Ovary (tissue), 10 donors: ENCODE measurements at regions of chr1 and their contacts with region 1.

Region 1: DNA sequence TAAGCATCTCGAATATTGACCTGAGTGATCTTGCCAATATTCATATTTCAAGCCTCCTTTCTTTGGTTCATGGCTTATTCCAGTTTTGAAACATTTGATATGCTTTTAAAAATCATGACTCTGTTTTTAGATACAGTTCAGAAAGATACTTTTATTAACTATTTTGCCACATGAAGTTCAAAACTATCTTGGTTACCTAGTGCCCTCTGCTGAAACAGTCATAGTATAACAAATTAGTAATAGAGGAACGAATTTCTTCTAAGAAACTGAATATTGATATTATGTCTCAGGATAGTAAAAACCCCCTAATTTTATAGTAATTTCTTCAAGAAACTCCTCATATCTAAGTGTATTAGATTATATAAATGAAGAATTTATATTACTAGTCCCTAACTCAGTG is 52.6 kb upstream of the RC3H1 start:
- DNase-seq: no peak
- H3K4me3 ChIP-seq: no peak overlapping the region
- H3K27ac ChIP-seq: no peak overlapping the region
- H3K4me1 ChIP-seq: no peaks in the 10 kb centered on the region
- H3K27me3 ChIP-seq: no peaks in the 10 kb centered on the region
- CTCF ChIP-seq: no peak
- EP300 ChIP-seq: no peak
- POLR2A ChIP-seq: no peak

Region 2: DNA sequence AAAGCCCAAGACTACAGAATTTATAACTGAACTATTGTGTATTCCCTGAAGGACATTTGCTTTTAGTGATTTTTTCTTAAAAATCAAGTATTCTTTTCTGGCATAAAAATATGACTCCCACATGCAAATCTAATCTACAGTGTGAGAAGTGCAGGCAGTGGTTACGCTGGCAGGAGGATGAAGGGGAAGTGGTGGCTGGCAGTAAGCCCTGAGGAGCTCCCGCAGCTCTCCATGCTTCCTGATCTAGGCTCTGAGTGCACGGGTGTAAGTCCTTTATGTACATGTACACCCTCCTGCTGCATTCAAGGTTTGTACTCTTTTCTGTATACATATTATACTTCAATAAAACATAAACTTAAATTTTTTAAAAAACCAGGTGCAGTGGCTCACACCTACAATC is 665.1 kb before region 1 on chr1:
- intact Hi-C with region 1: loop called in 1 of 4 experiments (anchors 10 kb)
- DNase-seq: peak; percentile 28 to 63 (median 45)
- H3K4me3 ChIP-seq: no peak overlapping the region
- H3K27ac ChIP-seq: no peak overlapping the region
- H3K4me1 ChIP-seq: peaks cover 9% of the 10 kb centered on the region
- H3K27me3 ChIP-seq: no peaks in the 10 kb centered on the region
- CTCF ChIP-seq: no peak
- EP300 ChIP-seq: no peak
- POLR2A ChIP-seq: no peak

Region 3: DNA sequence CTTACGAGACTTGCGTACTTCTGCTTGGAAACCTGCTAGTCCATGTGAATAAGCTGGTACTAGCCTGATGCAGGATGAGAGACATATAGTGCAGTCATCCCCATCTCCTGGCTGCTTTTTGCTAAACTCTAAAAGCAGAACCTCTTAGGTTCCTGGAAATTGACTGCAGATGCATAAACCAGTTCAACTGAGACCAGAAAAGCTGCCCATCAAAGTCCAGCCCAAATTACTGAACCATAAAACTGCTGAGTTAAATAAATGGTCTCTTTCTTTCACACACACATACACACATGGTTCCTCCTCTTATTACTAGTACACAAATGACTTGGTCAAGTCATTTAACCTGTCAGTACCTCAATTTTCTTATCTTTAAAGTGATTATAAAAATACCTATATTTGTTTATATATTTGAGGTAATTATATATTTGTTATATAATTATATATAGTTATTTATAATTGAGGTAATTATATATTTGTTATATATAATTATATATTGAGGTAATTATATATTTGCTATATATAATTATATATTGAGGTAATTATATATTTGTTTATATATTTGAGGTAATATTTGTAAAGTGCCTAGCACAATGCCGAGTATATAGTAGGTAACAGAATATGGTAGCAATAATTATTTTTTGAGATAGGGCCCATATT is 59.4 kb after region 1 on chr1:
- intact Hi-C with region 1: no loop called
- DNase-seq: no peak
- H3K4me3 ChIP-seq: no peak overlapping the region
- H3K27ac ChIP-seq: no peak overlapping the region
- H3K4me1 ChIP-seq: no peaks in the 10 kb centered on the region
- H3K27me3 ChIP-seq: no peaks in the 10 kb centered on the region
- CTCF ChIP-seq: no peak
- EP300 ChIP-seq: no peak
- POLR2A ChIP-seq: no peak

Region 4: DNA sequence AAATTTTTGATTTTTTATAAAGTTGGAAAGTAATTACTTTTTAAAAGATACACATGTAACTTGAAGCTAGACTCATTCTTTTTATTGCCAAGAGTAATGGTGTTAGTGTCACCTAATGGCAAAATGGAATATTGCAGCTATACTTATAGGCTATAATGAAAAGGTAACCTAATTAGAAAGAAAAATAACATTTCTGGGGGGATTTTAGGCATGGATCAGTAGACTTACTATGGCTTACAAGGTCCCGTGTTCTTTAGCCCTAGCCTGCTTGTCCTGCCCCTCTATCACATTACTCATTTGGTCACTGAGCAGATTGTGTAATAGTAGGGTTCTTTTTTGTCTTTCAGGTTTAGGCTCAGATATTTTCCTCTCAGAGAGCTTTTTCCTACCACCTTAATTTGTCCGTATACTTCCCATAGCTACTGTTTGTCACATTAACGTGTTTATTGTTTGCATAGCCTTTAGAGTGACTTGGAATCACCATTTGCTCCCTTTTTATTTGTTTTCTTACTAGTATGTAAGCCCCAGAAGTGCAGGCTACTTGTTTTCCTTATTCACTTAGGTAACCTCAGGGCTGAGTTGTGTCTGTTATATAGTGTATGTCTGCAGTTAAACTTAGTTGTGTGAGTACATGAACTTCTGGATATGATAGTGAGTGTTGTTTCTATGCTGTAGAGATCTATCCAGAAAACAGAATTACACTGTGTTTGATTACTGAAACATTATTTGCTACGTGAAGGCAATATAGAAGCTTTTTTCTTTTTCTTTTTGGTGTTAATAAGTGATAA is 143.2 kb after region 1 on chr1:
- intact Hi-C with region 1: no loop called
- DNase-seq: no peak
- H3K4me3 ChIP-seq: no peak overlapping the region
- H3K27ac ChIP-seq: no peak overlapping the region
- H3K4me1 ChIP-seq: peaks cover 3% of the 10 kb centered on the region
- H3K27me3 ChIP-seq: no peaks in the 10 kb centered on the region
- CTCF ChIP-seq: peak; percentile 27 to 62 (median 41)
- EP300 ChIP-seq: no peak
- POLR2A ChIP-seq: no peak